ENCODE measurements at regions of chr2 and their contacts with region 1.

Region 1: DNA sequence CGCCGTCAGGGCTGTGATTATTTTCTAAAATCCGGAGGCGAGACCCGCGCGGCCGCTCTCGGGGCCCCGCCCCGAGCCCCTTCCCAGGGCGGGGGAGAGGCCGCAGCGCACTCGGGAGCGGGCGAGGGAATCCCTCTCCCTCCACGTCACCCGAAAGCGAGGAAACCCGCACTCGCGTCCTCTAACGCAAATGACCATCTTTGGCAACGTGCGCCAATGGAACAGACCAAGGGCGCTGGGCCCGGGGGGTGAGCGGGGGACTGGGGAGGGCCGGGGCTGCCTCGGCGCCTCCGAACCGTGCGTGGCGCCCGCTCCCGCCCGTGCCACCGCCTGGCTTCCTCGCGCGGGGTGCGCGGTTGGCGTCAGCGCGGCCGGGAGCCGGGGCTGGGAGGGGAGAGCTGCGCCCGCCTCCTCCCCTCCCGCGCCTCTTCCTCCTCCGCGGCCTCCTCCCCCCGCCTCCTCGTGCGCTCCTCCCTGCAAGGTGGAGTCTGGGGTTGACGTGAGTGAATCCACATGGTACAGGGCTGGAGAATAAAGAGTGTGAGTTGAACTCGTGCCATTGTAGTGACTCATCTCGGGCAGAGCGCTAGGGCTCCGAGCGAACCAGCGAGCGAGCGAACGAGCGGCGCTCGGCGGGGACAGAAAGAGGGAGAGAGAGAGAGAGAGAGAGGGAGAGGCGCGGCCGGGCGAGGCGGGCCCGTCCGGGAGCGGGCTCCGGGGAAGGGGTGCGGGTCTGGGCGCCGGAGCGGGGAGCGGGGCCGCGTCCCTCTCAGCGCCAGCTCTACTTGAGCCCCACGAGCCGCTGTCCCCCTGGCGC is at the start of gene FOSL2:
- DNase-seq: peak; percentile 65 to 96 (median 90)
- H3K4me3 ChIP-seq: peak within 1 kb of the TSS; percentile 55 to 96 (median 81)
- H3K27ac ChIP-seq: peak within 1 kb of the TSS; percentile 82 to 99 (median 96)
- H3K27me3 ChIP-seq: no peaks in the 10 kb centered on the region
- CTCF ChIP-seq: peak in 20 of 56 donors; percentile 2 to 25 (median 10)
- total RNA-seq, gene FOSL2: 22.5 to 173 (median 64.0) TPM

Region 2: GRCh38 chr2:27723372-27724144 is 668.9 kb before region 1 on chr2:
- intact Hi-C with region 1: loop called (anchors 1 to 5 kb)
- DNase-seq: peak in 9 of 10 donors; percentile 40 to 83 (median 73)
- H3K4me3 ChIP-seq: peak overlapping the region in 2 of 59 donors; percentile 15 to 31
- H3K27ac ChIP-seq: peak overlapping the region in 54 of 59 donors; percentile 2 to 88 (median 64)
- H3K27me3 ChIP-seq: no peaks in the 10 kb centered on the region
- CTCF ChIP-seq: peak; percentile 69 to 94 (median 87)

Region 3: DNA sequence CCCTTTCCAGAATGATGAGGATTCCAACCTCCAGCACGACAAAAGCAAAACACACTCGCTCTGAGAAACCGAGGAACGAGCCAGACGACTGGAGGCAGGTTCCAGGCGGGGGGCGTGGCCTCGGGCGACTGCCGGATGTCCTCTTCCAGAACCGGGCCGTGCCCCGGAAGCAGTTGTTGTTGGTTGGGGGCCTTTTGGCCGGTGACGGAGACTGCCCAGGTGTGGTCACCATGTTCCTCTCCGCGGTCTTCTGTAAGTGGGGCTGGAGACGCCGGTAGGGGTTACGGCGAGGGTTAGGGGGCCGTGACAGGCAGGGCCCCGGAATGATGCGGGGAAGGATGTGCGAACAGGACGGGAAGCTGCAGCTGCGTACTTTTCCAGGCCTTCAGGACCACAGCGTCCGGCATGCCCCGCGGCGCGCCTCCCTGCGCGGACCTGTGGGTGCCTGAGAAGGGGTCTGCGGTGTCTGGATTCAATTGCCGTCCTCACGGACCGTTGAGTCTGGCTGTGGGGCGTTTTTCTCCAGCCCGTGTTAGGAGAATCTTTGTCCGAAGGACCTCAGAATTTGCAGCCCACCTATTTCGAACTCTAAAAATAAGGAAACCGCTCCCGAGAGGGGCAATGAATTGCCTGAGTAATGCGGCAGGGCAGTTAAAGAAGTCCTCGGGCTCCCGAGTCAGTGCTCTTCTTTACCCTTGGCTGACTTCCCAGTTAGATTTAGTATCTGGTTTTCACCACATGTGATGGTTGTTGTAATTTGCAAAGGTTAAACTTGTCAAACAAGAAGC is 620.8 kb before region 1 on chr2 and contains the start of gene MRPL33:
- intact Hi-C with region 1: loop called (anchors 5 to 10 kb)
- DNase-seq: peak; percentile 85 to 97 (median 94)
- H3K4me3 ChIP-seq: peak within 1 kb of the TSS; percentile 63 to 99 (median 88)
- H3K27ac ChIP-seq: peak within 1 kb of the TSS in 58 of 59 donors; percentile 67 to 98 (median 90)
- H3K27me3 ChIP-seq: peaks cover 0 to 13% (median 0%) of the 10 kb centered on the region in 45 donors
- CTCF ChIP-seq: peak in 30 of 56 donors; percentile 6 to 50 (median 26)
- total RNA-seq, gene MRPL33: 40.3 to 106 (median 70.5) TPM

Region 4: GRCh38 chr2:27954771-27955383 is 437.6 kb before region 1 on chr2:
- intact Hi-C with region 1: loop called in 1 of 2 experiments (anchors 10 kb)
- DNase-seq: peak in 2 of 10 donors; percentile 16
- H3K4me3 ChIP-seq: no peak overlapping the region
- H3K27ac ChIP-seq: peak overlapping the region in 52 of 59 donors; percentile 3 to 87 (median 50)
- H3K27me3 ChIP-seq: no peaks in the 10 kb centered on the region
- CTCF ChIP-seq: peak in 37 of 56 donors; percentile 15 to 55 (median 32)

Region 5: GRCh38 chr2:28224648-28225472 is 167.6 kb before region 1 on chr2:
- intact Hi-C with region 1: loop called in 1 of 2 experiments (anchors 10 kb)
- DNase-seq: peak in 1 of 10 donors; percentile 16
- H3K4me3 ChIP-seq: peak overlapping the region in 4 of 59 donors; percentile 7 to 35 (median 8)
- H3K27ac ChIP-seq: peak overlapping the region in 57 of 59 donors; percentile 14 to 93 (median 75)
- H3K27me3 ChIP-seq: no peaks in the 10 kb centered on the region
- CTCF ChIP-seq: no peak

Region 6: GRCh38 chr2:28751252-28751955 is 358.9 kb after region 1 on chr2 and contains the start of gene PPP1CB:
- intact Hi-C with region 1: loop called in 1 of 2 experiments (anchors 10 kb)
- DNase-seq: peak; percentile 85 to 98 (median 95)
- H3K4me3 ChIP-seq: peak within 1 kb of the TSS; percentile 59 to 99 (median 95)
- H3K27ac ChIP-seq: peak within 1 kb of the TSS; percentile 89 to 100 (median 99)
- H3K27me3 ChIP-seq: no peaks in the 10 kb centered on the region
- CTCF ChIP-seq: peak in 48 of 56 donors; percentile 11 to 69 (median 38)
- total RNA-seq, gene PPP1CB: 152 to 296 (median 223) TPM

Region 7: DNA sequence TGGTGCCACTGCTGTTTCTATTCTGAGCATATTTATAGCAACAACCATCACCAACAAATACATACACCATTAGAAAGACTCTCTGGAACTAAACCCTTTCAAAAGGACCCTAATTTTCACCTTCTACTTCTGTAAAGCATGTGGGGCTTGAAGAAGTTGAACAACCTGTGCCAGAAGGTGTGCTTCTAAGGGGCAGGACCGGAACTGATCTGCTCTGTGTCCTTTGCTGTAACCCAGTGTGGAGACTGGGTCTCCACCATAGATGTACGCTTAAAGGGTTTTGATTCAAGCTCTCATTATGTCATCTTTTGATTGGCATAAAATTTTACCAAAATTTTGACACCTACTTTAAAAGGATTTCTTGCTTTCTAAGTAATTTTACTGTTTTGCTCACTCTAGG is 542.3 kb after region 1 on chr2:
- intact Hi-C with region 1: no loop called
- DNase-seq: no peak
- H3K4me3 ChIP-seq: no peak overlapping the region
- H3K27ac ChIP-seq: no peak overlapping the region
- H3K27me3 ChIP-seq: no peaks in the 10 kb centered on the region
- CTCF ChIP-seq: no peak